ENCODE measurements at regions of chr2 and their contacts with region 1.

Region 1: DNA sequence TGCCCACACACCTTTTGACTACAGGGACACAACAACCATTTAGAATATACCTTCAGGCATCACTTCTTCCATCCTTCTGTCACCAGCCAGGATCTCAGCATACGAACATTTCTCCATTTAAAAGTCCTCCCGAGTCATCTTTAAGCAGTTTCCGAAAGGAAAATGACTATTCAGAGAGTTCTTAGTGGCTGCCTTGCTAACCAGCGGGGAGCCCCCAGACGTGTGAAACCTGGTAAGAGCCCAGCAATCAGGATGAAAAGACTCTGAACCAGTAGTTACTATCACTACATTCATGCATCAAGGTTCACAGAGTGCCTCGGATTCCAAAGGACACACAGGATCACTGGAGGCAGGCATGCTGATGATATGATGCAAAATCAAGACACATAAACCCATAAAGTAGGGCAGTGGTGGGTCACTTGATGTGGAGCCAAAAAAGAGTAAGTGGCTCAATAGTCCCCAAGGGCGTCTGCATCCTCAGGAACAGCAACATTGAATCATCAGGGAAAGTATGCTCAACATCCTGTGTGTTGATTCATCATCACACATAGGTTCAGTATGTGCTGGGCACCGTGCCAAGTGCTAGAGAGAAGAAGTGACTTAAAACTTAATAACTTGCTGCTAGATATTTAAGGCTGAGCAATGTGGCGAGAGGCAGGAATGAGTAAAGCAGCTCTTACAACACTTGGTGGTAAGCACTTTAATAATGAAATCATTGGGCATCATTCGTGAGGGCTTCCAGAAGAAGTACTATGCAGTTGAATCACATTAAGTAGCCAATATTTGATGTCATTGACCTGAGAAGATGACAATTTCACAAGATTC is 4.4 kb downstream of the CCL20 start:
- DNase-seq: peak; percentile 100
- H3K4me3 ChIP-seq: peak overlapping the region; percentile 25 to 83 (median 66)
- H3K27ac ChIP-seq: peak overlapping the region; percentile 98
- H3K4me1 ChIP-seq: peaks cover 31% of the 10 kb centered on the region
- H3K27me3 ChIP-seq: no peaks in the 10 kb centered on the region
- CTCF ChIP-seq: peak in 1 of 2 donors; percentile 9

Region 2: GRCh38 chr2:227376911-227377396 is 441.1 kb before region 1 on chr2:
- CTCF ChIA-PET with region 1: no interaction called
- dilution Hi-C with region 1: no loop called
- in situ Hi-C with region 1: no loop called
- intact Hi-C with region 1: loop called (anchors 5 kb)
- DNase-seq: no peak
- H3K4me3 ChIP-seq: no peak overlapping the region
- H3K27ac ChIP-seq: no peak overlapping the region
- H3K4me1 ChIP-seq: no peaks in the 10 kb centered on the region
- H3K27me3 ChIP-seq: no peaks in the 10 kb centered on the region
- CTCF ChIP-seq: no peak

Region 3: DNA sequence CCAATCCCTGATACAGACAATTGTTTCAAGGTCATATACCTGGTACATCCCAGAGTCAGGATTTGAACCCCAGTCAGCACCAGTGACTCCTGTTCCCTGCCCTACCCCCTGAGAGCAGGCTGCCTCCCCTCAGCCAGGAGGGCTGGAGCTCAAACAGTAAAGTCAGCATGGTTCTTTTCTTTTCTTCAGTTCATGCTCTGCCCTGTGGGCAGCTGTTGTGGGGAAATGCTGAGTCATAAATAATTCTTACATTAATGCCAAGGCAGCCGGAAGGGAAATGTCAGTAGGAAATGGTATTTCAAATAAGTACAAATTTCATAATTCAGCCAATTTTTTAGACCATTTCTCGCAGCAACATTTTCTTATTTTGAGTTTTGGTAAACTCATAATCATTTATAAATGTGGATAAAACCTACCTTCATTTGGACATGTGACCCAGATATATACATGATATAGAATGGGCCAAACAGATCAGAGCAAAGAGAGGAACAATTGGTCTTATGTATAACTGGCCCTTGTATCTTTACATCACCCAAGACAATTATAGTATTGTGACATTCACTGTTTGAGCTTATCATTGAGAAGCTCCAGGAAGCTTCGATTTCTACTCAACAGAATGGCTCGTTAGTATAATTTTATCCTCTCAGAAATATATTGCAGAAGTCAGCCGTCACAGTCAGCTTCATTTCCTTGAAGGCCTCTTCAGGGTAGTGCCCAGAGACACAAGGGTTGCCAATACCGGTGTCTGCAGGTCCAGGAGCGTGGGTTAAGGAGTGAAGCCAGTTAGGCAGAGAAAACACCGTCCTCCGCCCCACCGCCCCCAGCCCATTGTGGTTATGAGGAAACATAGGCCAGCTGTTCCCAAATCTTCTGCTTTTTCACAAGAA is 402.3 kb before region 1 on chr2:
- CTCF ChIA-PET with region 1: no interaction called
- dilution Hi-C with region 1: no loop called
- in situ Hi-C with region 1: no loop called
- intact Hi-C with region 1: loop called (anchors 1 kb)
- DNase-seq: peak; percentile 81
- H3K4me3 ChIP-seq: no peak overlapping the region
- H3K27ac ChIP-seq: peak overlapping the region; percentile 82
- H3K4me1 ChIP-seq: peaks cover 37% of the 10 kb centered on the region
- H3K27me3 ChIP-seq: no peaks in the 10 kb centered on the region
- CTCF ChIP-seq: no peak

Region 4: GRCh38 chr2:227834423-227834822 is 16.4 kb after region 1 on chr2:
- CTCF ChIA-PET with region 1: no interaction called
- dilution Hi-C with region 1: no loop called
- in situ Hi-C with region 1: no loop called
- intact Hi-C with region 1: loop called (anchors 2 kb)
- DNase-seq: peak; percentile 62
- H3K4me3 ChIP-seq: no peak overlapping the region
- H3K27ac ChIP-seq: no peak overlapping the region
- H3K4me1 ChIP-seq: peaks cover 2% of the 10 kb centered on the region
- H3K27me3 ChIP-seq: no peaks in the 10 kb centered on the region
- CTCF ChIP-seq: no peak

Region 5: DNA sequence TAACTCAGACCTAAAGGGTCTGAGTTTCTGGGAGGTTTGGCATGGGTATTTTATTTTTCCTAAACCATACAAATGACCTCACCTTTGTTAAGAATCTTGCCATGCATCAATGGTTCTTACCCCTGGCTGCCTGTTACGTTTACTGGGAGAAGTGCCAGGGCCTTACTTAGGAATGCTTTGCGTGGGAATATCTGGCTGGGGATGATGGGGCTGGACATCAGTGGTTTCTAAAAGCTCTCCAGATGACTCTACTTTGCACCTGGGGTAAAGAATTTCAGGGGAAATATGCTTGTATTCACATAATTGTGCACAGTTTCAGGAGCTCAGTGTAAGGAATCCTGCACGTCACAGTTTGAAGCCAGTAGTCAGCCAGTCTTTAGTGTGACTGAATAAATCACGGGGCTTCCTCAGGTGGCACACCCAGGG is 35.2 kb after region 1 on chr2:
- CTCF ChIA-PET with region 1: no interaction called
- dilution Hi-C with region 1: no loop called
- in situ Hi-C with region 1: no loop called
- intact Hi-C with region 1: loop called (anchors 2 kb)
- DNase-seq: peak; percentile 96
- H3K4me3 ChIP-seq: no peak overlapping the region
- H3K27ac ChIP-seq: peak overlapping the region; percentile 78
- H3K4me1 ChIP-seq: peaks cover 37% of the 10 kb centered on the region
- H3K27me3 ChIP-seq: no peaks in the 10 kb centered on the region
- CTCF ChIP-seq: no peak

Region 6: GRCh38 chr2:227862227-227862740 is 44.2 kb after region 1 on chr2:
- CTCF ChIA-PET with region 1: interaction called, 3 read pairs
- dilution Hi-C with region 1: no loop called
- in situ Hi-C with region 1: no loop called
- intact Hi-C with region 1: loop called (anchors 1 kb)
- DNase-seq: peak; percentile 36
- H3K4me3 ChIP-seq: no peak overlapping the region
- H3K27ac ChIP-seq: peak overlapping the region; percentile 69
- H3K4me1 ChIP-seq: peaks cover 33% of the 10 kb centered on the region
- H3K27me3 ChIP-seq: no peaks in the 10 kb centered on the region
- CTCF ChIP-seq: peak; percentile 68 to 71

Region 7: GRCh38 chr2:227884511-227884947 is 66.5 kb after region 1 on chr2:
- CTCF ChIA-PET with region 1: no interaction called
- dilution Hi-C with region 1: no loop called
- in situ Hi-C with region 1: no loop called
- intact Hi-C with region 1: loop called (anchors 1 kb)
- DNase-seq: peak; percentile 58
- H3K4me3 ChIP-seq: no peak overlapping the region
- H3K27ac ChIP-seq: no peak overlapping the region
- H3K4me1 ChIP-seq: peaks cover 7% of the 10 kb centered on the region
- H3K27me3 ChIP-seq: no peaks in the 10 kb centered on the region
- CTCF ChIP-seq: peak; percentile 90 to 98

Measured in mammary epithelial cell (primary cell).